ENCODE measurements at regions of chr2 and their contacts with region 1.

Region 1: GRCh38 chr2:68185541-68186164 is 28.0 kb downstream of the PNO1 start:
- DNase-seq: peak; percentile 75 to 84 (median 79)
- H3K4me3 ChIP-seq: no peak overlapping the region
- H3K27ac ChIP-seq: no peak overlapping the region
- H3K4me1 ChIP-seq: peaks cover 0 to 6% (median 2%) of the 10 kb centered on the region in 4 experiments
- H3K27me3 ChIP-seq: no peaks in the 10 kb centered on the region

Region 2: DNA sequence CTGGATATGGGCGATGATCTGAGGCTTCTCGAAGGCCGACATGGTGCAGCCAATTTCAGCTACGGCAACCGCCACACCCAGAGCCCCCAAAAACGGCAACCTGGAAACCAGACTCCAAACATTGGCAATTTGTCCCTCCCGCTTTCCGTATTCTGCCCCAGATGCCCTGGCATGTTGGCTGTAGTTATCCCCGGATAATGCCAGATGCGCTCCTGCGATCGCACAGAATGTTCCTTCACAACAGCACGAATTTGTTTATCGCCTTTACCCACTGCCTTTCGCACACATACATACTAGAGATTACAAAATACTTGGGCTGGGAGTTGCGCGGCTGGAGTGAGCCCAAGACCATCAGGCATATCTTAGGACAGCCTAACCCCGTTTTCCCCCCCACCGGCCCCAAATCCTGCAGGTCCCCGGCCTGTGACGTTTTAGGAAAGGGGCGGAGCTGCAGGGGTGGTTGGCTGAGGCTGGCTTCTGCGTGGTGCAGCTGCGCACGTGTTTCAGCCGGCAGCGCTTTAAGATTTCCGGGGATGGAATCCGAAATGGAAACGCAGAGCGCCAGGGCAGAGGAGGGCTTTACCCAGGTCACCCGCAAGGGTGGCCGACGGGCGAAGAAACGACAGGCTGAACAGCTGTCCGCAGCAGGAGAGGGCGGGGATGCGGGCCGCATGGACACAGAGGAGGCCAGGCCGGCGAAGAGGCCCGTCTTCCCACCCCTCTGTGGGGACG is 28.1 kb before region 1 on chr2 and contains the start of gene PNO1:
- CTCF ChIA-PET with region 1: interaction called, 11 read pairs
- POLR2A ChIA-PET with region 1: no interaction called
- DNase-seq: peak; percentile 97 to 98 (median 98)
- H3K4me3 ChIP-seq: peak within 1 kb of the TSS; percentile 80 to 98 (median 95)
- H3K27ac ChIP-seq: peak within 1 kb of the TSS; percentile 99
- H3K4me1 ChIP-seq: peaks cover 21 to 41% (median 32%) of the 10 kb centered on the region in 4 experiments
- H3K27me3 ChIP-seq: no peaks in the 10 kb centered on the region

Region 3: GRCh38 chr2:68295516-68295915 is 109.9 kb after region 1 on chr2:
- CTCF ChIA-PET with region 1: interaction called, 11 read pairs
- POLR2A ChIA-PET with region 1: no interaction called
- DNase-seq: peak; percentile 63 to 92 (median 86)
- H3K4me3 ChIP-seq: no peak overlapping the region
- H3K27ac ChIP-seq: no peak overlapping the region
- H3K4me1 ChIP-seq: peaks cover 9 to 30% (median 24%) of the 10 kb centered on the region in 4 experiments
- H3K27me3 ChIP-seq: no peaks in the 10 kb centered on the region